ENCODE measurements at regions of chr9 and their contacts with region 1.

Region 1: DNA sequence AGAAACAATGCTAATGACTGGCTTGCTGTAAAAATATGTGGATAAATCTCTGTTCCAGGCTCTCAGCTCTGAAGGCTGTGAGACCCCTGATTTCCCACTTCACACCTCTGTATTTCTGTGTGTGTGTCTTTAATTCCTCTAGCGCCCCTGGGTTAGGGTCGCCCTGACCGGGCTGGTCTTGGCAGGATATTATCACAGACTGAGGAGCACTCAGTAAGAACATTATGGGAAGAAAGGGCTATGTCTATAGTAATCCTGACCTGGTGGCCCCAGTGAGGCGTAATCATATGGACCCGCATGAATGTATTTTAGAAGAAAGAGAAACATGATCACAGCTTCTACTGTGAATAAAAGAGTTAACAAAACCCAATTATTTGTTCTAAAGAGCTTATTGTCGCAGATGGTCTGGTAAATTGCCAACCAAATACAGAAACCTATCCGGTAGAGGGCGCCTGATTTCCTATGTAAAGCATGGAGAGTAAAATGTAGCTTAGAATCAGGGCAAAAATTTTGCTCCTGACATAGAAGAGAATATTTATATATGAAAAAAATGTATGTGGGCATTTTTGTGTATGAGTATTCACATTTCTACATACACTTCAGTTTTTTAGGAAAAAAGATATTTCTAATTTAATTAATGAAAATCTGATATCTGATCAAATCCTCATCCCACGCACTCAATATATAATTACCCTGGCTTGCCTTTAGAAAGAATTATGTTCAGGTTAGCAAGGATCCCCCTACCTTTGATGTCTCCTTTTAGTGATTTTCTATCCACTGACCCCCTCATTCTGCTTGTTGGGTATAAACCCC is 5.8 kb upstream of the IFNA1 start:
- DNase-seq: peak; percentile 52
- H3K4me3 ChIP-seq: no peak overlapping the region
- H3K27ac ChIP-seq: no peak overlapping the region
- H3K27me3 ChIP-seq: no peaks in the 10 kb centered on the region
- CTCF ChIP-seq: peak; percentile 73

Region 2: DNA sequence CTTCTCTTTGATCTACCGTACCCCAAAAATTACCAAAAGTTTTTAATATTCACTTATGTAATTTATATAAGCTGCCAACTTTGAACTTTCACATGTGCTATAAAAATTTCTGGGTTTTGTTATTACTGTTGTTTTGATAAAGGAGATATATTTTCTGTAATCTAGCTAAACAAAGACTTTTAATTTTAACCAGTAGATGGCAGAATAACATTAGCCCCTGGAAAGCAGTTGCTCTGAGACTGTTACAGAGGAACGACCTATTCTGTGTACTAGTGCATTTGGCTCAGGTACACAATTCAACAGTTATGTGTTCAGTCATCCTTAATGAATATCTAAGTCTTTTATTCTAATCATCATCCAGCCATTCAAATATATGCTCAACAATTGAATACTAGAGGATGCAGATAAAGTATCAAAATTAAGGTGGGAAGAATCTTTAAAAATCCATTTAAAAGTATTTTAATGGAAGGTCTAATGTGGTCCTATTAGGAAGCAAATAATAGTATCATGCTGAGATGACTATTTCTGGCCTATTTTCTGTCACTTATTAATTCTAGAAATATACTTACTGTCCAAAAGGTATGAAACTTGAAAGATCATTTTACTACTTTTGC is 107.8 kb before region 1 on chr9:
- CTCF ChIA-PET with region 1: interaction called, 29 read pairs
- POLR2A ChIA-PET with region 1: no interaction called
- DNase-seq: no peak
- H3K4me3 ChIP-seq: no peak overlapping the region
- H3K27ac ChIP-seq: no peak overlapping the region
- H3K27me3 ChIP-seq: no peaks in the 10 kb centered on the region
- CTCF ChIP-seq: peak; percentile 75

Region 3: DNA sequence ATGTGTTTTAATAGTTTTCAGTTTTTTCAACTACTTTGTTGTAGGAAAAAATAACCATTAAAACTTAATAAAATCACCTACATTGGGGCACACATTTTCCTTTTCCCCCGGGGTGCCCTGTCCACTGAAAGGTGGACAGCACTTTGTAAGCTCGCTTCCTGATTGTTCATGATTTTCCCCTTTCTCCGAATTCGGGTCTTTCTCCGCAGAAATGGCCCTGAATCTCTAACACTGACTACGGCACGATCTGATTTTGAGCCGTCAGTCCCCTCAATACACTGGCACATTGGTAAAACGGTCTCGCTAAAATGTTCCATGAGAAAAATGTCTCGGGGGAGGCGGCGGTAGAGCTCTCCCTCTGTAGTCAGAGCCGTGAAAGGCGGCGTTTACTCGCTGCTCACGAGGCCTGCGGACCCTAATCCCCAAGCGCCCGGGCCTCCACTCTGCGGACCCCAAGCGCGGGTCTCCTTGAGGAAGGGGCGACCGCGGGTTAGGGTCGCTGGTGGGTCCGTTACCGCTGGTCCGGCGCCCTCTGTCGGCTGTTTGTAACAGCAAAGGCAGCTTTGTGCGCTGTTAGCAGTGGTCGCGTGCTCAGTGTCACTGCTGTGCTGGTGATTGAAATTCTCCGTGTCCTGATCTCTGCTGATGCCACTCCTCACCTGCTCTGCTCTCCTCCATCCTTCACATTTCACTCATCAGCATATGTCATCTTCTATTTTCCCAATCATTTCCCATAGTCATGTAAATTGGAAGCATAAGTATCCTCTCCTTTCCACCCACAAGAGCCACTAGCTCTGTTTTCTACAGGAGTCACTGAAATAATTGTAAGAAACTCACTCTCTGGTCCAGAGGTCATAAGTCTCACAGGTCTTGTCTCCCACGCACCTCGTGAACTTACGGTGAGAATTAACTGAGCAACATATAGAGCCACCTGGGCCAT is 38.4 kb before region 1 on chr9:
- CTCF ChIA-PET with region 1: interaction called, 17 read pairs
- POLR2A ChIA-PET with region 1: no interaction called
- DNase-seq: no peak
- H3K4me3 ChIP-seq: peak overlapping the region; percentile 53
- H3K27ac ChIP-seq: no peak overlapping the region
- H3K27me3 ChIP-seq: peaks cover 26% of the 10 kb centered on the region
- CTCF ChIP-seq: peak; percentile 82

Region 4: DNA sequence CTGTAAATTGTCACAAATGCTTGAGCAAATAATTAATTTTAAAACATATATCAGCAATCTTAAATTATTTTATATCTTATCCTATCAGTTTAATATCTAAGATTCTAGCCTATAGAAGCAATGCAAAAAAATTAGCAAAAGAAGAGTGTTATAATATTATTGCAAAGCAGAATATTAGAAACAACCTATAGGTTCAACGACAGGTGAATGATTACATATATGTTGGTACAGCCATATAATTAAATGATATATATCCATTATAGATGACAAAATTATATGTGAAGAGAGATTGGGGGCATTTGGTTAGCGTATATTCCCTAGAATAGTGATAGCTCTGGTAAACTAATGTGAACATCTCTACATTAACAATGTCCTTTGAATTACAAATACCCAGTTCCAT is 47.8 kb after region 1 on chr9 and contains the start of gene IFNE:
- CTCF ChIA-PET with region 1: interaction called, 10 read pairs
- POLR2A ChIA-PET with region 1: no interaction called
- DNase-seq: no peak
- H3K4me3 ChIP-seq: no peak within 1 kb of the TSS
- H3K27ac ChIP-seq: no peak within 1 kb of the TSS
- H3K27me3 ChIP-seq: no peaks in the 10 kb centered on the region
- CTCF ChIP-seq: no peak
- polyA plus RNA-seq, gene IFNE: 0.52 and 0.67 TPM in 2 replicates

Region 5: DNA sequence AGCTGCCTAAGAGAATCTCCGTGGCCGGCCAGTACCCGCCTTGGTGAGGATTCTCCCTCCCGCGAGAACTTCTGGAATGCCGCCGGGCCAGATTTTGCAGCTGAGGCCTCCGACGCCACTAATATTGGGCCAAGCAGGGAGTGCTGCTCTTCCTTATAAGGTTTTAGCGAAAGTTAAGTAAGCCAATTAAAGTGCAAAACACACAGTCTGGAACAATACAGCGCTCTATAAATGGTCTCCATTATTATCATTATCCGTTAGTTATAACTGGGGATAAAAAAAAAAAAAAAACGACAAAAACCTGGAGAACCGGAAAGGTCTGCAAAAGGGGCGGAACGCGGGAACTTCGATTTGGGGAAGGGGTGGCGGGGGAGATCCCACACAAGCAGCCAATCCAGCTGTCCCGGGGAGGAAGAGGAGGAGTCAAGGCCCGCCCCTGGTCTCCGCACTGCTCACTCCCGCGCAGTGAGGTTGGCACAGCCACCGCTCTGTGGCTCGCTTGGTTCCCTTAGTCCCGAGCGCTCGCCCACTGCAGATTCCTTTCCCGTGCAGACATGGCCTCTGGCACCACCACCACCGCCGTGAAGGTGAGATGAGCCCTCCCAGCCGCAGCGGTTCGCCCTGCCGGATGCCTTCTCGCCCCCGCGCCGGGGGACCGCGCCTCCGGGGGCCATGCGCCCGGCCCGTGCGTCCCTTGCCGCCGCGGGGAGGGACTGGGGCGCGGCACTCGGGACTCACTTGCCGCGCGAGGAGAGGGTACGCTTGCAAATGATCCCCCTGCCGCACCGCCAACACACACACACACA is 368.0 kb after region 1 on chr9 and contains the start of gene MTAP:
- CTCF ChIA-PET with region 1: interaction called, 10 read pairs
- POLR2A ChIA-PET with region 1: no interaction called
- DNase-seq: peak; percentile 87
- H3K4me3 ChIP-seq: peak within 1 kb of the TSS; percentile 86
- H3K27ac ChIP-seq: peak within 1 kb of the TSS; percentile 84
- H3K27me3 ChIP-seq: no peaks in the 10 kb centered on the region
- CTCF ChIP-seq: no peak
- polyA plus RNA-seq, gene MTAP: 21.7 and 26.1 TPM in 2 replicates